ENCODE measurements at regions of chr15 and their contacts with region 1.

Region 1: GRCh38 chr15:74208901-74209559 is 6.4 kb upstream of the STRA6 start:
- DNase-seq: no peak
- ATAC-seq: no peak
- H3K4me3 ChIP-seq: no peak overlapping the region
- H3K27ac ChIP-seq: no peak overlapping the region
- H3K4me1 ChIP-seq: no peaks in the 10 kb centered on the region
- H3K27me3 ChIP-seq: no peaks in the 10 kb centered on the region

Region 2: DNA sequence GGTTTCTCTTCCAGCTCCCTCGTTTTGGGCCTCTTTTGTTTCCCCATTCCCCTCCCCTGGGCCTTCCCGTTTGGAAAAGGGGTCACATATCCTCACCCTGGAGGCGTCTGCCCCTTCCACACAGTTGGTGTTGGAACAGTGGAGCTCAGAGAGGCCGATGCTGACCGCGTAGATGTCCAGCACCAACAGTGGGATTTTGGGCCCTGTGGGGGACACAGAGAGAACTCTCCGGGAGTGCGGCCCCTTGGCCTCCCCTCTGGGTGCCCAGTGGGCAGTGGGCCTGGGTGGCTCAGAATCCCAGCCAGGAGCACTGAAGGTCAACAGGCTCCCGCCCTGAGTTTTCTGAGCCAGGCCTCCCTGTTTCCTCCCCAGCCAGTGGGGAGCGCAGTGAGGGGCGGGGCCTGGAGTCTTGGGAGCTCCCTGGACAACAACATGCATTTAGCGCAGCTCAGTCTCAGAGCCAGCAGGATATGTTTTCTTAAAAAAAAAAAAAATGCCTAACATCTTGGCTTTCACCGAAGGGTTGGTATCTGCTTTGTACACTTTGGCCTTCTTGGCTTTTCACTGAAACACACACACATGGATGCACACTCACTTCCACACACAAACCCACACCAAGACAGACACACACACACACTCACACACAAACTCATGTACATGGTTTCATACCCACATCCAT is 36.2 kb before region 1 on chr15:
- intact Hi-C with region 1: loop called in 1 of 2 experiments (anchors 5 kb)
- DNase-seq: peak; percentile 83 to 88
- ATAC-seq: peak; percentile 81
- H3K4me3 ChIP-seq: no peak overlapping the region
- H3K27ac ChIP-seq: peak overlapping the region in 1 of 2 donors; percentile 5
- H3K4me1 ChIP-seq: no peaks in the 10 kb centered on the region
- H3K27me3 ChIP-seq: no peaks in the 10 kb centered on the region

Measured in aorta (tissue), 5 donors.